Endothelial cell of umbilical vein (primary cell): ENCODE measurements at regions of chr1 and their contacts with region 1.

Region 1: DNA sequence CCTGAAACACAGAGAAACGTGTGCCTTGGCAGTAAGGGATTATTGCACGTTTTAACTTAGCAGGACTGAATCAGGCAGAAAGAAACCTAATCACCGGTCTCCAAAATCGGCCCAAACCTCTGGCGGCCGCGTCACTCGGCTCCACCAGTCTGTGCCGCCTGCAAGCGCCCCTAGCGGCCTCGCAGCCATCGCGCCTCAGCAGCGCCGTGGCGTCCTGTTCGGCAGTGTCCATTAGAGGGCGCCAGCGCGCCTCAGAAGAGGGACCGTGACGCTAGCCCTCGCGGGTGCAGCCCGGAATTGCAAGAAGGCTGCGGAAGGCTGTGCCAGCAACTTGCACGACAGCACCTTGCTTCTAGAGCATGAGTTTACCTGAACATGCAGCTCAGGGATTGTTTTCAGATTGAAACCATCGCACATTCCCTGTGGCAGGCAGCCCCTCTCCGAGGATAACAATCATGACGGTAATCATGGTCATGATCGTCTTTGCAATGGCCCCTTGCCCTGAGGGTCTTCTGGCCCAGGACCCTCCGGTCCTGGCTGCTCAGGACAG is 164.4 kb downstream of the TRIM33 start:
- DNase-seq: peak; percentile 94
- H3K4me3 ChIP-seq: peak overlapping the region; percentile 15 to 63 (median 35)
- H3K27ac ChIP-seq: no peak overlapping the region
- H3K4me1 ChIP-seq: peaks cover 7% of the 10 kb centered on the region
- H3K27me3 ChIP-seq: peaks cover 0 to 2% of the 10 kb centered on the region in 2 experiments
- CTCF ChIP-seq: peak; percentile 100
- POLR2A ChIP-seq: no peak

Region 2: DNA sequence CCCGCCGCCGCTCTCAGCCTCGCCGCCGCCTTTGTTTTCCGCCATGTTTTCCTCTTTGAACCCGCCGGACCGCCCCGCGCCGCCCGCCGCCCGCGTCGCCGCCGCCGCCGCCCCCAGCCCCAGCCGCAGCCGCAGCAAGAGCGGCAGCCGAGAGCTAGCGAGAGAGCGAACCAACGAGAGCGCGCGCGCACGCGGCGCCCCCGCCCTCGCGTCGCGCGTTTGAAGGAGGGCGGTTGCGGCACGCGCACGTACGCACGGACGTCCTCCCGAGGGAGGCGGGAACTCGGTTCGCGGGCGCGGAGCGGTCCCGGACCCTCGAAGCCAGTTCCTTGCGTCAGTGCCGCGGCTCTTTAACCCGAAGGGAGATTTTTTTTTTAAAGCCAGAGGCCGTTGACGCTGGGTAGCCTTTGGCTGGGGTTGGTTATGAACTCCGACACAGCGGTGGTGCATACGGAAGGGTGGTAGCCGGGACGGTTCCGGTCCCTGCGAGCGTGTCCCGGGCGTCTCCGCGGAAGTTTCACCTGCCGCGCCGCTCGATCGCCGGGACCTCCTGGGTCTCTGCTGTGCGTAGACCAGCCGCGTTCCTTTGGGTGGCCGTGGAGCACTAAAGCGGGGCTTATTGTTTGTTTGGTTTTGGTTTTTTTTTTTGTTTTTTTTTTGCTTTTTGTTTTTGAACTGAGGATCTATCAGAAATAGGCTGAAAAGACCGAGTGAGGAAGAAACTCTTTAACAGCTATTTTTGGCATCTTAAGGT is 164.7 kb after region 1 on chr1 and contains the start of gene TRIM33:
- CTCF ChIA-PET with region 1: interaction called, 3 read pairs
- POLR2A ChIA-PET with region 1: no interaction called
- dilution Hi-C with region 1: no loop called
- intact Hi-C with region 1: loop called (anchors 1 kb)
- DNase-seq: peak; percentile 96
- H3K4me3 ChIP-seq: peak within 1 kb of the TSS; percentile 67 to 95 (median 95)
- H3K27ac ChIP-seq: peak within 1 kb of the TSS; percentile 80
- H3K4me1 ChIP-seq: peaks cover 21% of the 10 kb centered on the region
- H3K27me3 ChIP-seq: peaks cover 0 to 5% of the 10 kb centered on the region in 2 experiments
- CTCF ChIP-seq: no peak
- POLR2A ChIP-seq: peak; percentile 90
- total RNA-seq, gene TRIM33: 29.1 and 29.7 TPM in 2 replicates

Region 3: DNA sequence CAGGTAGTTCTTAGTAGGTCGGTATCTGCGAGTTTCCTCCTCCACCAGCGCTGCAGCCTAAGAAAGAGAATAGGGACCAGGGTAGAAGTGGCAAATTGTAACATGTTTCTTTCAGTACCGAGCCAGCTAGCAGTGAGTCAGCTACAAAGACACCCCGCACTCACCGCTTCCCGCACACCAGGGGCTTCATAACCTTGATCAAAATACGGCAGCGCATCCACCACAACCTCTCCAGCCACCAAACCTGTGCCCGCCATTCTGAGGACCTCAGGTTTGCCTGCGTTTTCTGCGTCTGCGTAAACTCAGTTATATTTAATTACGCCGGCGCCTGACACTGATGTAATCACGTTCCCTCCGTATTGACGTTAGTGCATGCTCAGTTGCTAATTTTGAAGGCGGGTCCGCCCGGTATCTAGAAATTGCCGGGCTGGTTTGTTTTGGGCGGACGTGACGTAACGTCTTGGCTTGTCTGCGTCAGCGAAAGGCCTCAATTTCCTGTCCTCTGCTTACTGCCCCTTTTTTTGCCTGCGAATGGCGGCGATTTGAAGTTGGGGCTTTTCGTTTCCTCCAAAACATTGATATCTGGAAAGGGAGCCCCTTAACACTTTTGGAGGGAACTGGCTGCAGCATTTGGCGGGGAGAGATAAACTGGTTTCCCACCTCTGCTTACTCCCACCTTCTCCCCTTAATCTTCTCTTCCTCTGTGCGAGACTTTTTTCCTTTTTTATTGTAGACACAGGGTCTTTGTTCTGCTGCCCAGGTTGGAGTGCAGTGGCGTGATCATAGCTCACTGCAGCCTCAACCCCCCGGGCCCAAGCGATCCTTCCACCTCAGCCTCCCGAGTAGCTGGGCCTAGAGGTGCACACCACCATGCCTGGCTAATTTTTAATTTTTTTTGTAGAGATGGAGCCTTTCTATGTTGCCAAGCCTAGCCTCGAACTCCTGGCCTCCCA is 235.1 kb after region 1 on chr1 and contains the start of gene BCAS2:
- CTCF ChIA-PET with region 1: no interaction called
- POLR2A ChIA-PET with region 1: no interaction called
- dilution Hi-C with region 1: no loop called
- intact Hi-C with region 1: loop called (anchors 2 kb)
- DNase-seq: peak; percentile 98
- H3K4me3 ChIP-seq: peak within 1 kb of the TSS; percentile 66 to 96 (median 85)
- H3K27ac ChIP-seq: peak within 1 kb of the TSS; percentile 68
- H3K4me1 ChIP-seq: peaks cover 7% of the 10 kb centered on the region
- H3K27me3 ChIP-seq: no peaks in the 10 kb centered on the region
- CTCF ChIP-seq: no peak
- POLR2A ChIP-seq: peak; percentile 93
- total RNA-seq, gene BCAS2: 41.7 and 43.5 TPM in 2 replicates

Region 4: GRCh38 chr1:114670083-114671010 is 323.8 kb after region 1 on chr1:
- CTCF ChIA-PET with region 1: interaction called, 17 read pairs
- POLR2A ChIA-PET with region 1: no interaction called
- dilution Hi-C with region 1: no loop called
- intact Hi-C with region 1: loop called (anchors 1 kb)
- DNase-seq: peak; percentile 91
- H3K4me3 ChIP-seq: peak overlapping the region in 2 of 3 experiments; percentile 49 to 62
- H3K27ac ChIP-seq: no peak overlapping the region
- H3K4me1 ChIP-seq: peaks cover 11% of the 10 kb centered on the region
- H3K27me3 ChIP-seq: peaks cover 10 to 17% of the 10 kb centered on the region in 2 experiments
- CTCF ChIP-seq: no peak
- POLR2A ChIP-seq: no peak

Region 5: DNA sequence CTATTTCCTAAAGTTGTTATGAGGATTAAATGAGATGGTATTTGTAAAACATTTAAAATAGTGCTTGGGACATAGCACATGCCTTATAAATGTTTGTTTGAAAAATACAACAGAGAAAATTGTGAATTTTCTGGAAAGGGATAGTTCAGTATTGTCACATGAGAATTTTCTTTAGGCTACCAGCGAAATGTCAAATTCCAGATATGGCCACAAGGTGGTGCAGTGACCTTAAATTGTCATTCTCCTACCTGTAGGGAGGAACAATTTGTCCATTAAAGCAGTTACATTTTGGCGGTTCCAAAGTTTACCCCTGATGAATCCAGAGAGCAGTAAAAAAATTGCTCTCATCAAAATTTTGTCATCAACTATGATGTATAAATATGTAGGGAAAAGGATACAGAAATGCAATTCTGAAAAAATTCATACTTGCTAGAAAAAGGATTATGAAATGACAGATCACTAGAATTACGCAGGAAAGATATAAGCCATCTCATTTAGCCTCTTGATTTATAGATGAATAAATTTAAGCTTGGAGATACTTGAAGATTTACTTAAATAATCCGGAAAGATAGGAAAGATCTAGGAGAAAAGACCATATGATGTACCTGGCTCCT is 632.8 kb after region 1 on chr1:
- CTCF ChIA-PET with region 1: no interaction called
- POLR2A ChIA-PET with region 1: no interaction called
- dilution Hi-C with region 1: no loop called
- intact Hi-C with region 1: loop called (anchors 10 kb)
- DNase-seq: peak; percentile 54
- H3K4me3 ChIP-seq: no peak overlapping the region
- H3K27ac ChIP-seq: no peak overlapping the region
- H3K4me1 ChIP-seq: no peaks in the 10 kb centered on the region
- H3K27me3 ChIP-seq: peaks cover 0 to 14% of the 10 kb centered on the region in 2 experiments
- CTCF ChIP-seq: peak; percentile 50 to 60
- POLR2A ChIP-seq: no peak

Region 6: DNA sequence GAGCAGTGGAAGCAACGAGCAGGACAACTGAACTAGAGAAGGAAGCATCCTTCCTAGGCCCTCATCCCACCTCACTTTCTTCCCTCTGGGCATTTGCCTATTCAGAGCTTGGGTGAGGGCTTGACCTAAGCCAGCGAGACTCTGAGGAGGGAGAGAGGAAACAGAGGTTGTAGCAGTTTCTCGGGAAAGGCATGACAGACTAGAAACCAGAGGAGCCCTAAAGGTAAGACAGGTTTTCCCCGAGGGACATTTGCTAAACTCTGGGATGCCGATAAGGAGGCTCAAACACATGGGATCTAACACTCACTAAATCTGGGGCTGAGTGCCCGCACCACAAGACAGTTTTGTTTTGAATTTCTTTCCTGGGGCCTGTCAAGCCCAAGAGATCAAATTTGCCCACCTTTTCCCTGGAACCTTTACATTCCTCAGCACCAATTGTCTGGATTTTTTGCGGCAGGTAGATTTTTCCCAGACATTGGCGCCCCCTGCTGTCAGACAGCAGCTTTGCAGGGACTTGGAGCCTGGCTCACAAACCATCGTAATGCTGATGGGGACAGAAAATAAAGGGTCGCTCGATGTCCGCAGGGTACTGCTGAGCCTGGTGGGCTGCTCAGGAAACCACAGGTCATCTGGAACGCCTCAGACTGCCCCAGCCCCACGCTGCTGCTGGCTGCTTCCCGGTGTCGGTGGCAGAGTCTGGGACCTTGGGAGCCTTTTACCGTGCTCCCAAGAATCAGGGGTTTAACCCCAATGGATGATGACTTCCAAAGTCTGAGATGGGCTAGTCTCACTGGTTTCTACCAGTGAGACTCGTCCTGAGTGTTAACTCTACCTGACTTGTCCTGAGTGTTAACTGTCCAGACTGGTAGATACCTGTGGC is 766.2 kb after region 1 on chr1:
- CTCF ChIA-PET with region 1: interaction called, 3 read pairs
- POLR2A ChIA-PET with region 1: no interaction called
- dilution Hi-C with region 1: no loop called
- intact Hi-C with region 1: loop called (anchors 1 kb)
- DNase-seq: peak; percentile 25
- H3K4me3 ChIP-seq: no peak overlapping the region
- H3K27ac ChIP-seq: no peak overlapping the region
- H3K4me1 ChIP-seq: no peaks in the 10 kb centered on the region
- H3K27me3 ChIP-seq: no peaks in the 10 kb centered on the region
- CTCF ChIP-seq: peak; percentile 86 to 88
- POLR2A ChIP-seq: no peak